Right cardiac atrium (tissue), 5 donors: ENCODE measurements at regions of chr7 and their contacts with region 1.

Region 1: DNA sequence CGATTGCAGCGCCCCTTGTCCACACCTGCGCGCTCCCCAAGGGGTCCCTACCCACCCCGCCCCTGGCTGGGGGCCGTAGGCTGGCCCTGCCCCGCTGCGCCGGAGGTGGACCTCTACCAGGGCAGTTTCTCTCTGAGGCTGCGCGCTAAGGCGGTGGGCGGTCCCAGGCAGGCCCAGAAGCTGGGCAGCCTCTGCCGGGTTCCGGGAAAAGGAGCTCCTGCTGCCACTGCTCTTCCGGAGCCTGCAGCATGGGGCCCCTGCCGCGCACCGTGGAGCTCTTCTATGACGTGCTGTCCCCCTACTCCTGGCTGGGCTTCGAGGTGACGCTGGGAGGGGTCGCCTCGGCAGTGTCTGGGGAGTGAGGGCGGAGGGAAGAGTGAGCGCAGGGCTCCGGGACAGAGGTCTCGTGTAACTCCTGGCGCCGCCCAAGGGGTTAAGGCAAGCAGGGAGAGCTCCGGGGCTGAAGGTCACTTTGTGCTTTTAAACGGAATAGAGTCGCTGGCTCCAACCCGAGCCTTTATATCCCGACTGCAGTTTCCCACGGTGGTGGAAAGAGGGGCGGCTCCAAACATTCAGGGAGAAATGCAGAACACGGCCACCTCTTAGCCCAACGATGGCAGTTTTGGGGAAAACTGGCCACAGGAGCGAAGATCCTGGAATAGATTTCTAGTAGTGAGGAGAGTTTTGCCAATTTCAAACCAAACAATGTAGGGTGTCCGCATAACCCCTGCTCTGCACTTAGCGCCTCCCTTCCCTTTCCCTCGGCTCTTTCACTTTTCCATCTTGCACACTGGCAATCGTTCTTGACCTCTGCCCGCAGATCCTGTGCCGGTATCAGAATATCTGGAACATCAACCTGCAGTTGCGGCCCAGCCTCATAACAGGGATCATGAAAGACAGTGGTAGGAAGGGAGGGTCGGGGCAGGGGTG is at the start of gene GSTK1:
- DNase-seq: peak; percentile 91 to 96 (median 95)
- ATAC-seq: peak; percentile 98 to 99
- H3K4me3 ChIP-seq: peak within 1 kb of the TSS; percentile 75
- H3K27ac ChIP-seq: peak within 1 kb of the TSS; percentile 98
- H3K4me1 ChIP-seq: peaks cover 10% of the 10 kb centered on the region
- H3K27me3 ChIP-seq: no peaks in the 10 kb centered on the region
- total RNA-seq, gene GSTK1: 182 to 249 (median 234) TPM

Region 2: DNA sequence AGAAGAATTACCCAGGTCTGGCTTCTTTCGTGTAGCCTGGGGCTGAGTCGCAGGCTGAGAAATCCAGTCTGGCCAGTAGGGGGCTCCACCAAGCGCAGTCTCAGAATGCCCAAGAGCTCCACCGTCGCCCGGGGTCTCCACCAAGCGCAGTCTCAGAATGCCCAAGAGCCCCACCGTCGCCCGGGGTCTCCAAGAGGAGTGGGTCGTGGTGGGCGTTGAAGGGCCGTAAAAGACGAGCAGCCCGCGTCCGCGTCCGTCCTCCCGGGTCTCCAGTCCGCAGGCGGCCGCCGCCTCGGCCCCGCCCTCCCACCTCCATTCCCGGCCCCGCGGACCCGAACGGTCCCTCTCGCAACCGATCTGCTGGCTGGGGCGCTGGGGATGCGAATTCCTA is 116.7 kb after region 1 on chr7:
- intact Hi-C with region 1: loop called in 1 of 4 experiments (anchors 10 kb)
- DNase-seq: peak; percentile 86 to 96 (median 95)
- ATAC-seq: peak; percentile 80
- H3K4me3 ChIP-seq: peak overlapping the region; percentile 60
- H3K27ac ChIP-seq: peak overlapping the region; percentile 83
- H3K4me1 ChIP-seq: peaks cover 18% of the 10 kb centered on the region
- H3K27me3 ChIP-seq: no peaks in the 10 kb centered on the region

Region 3: GRCh38 chr7:143416565-143417149 is 153.1 kb after region 1 on chr7:
- intact Hi-C with region 1: loop called in 1 of 4 experiments (anchors 10 kb)
- DNase-seq: no peak
- ATAC-seq: peak in 1 of 2 donors; percentile 43
- H3K4me3 ChIP-seq: no peak overlapping the region
- H3K27ac ChIP-seq: no peak overlapping the region
- H3K4me1 ChIP-seq: no peaks in the 10 kb centered on the region
- H3K27me3 ChIP-seq: no peaks in the 10 kb centered on the region